Stomach (tissue), 19 donors: ENCODE measurements at regions of chr10 and their contacts with region 1.

Region 1: DNA sequence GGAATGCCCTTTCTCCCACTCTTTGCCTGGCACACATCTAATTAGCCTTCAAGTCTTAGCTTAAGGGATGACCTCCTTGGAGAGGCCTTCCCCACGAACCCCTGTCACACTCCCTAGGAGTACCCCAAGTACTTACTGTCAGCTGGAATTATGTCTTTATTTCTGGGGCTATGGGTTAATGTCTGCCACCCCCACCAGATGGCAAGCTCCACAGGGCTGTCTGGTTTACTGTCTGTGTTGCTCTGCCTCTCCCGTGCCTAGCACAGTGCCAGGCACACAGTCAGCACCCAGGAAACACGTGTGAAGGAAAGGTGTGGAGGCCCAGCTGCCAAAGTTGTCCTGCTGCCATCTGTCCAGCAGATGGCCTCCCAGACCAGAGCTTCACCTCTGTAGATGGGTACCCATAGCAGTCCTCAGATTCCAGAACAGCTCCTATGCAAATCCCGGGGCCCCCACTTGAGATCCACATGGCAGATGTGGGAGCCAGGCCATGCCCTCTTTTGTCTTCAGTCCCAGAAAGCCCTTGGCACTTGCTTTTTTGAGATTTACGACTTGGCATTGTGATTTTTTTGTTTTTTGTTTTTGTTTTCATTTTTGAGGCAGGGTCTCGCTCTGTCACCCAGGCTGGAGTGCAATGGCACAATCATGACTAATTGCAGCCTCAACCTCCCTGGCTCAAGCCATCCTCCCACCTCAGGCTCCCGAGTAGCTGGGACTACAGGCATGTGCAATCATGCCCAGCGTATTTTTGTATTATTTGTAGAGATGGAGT is 17.2 kb upstream of the PALD1 start:
- DNase-seq: peak; percentile 59 to 82
- H3K4me3 ChIP-seq: no peak overlapping the region
- H3K27ac ChIP-seq: peak overlapping the region in 1 of 5 donors; percentile 85
- H3K4me1 ChIP-seq: peaks cover 22 to 44% (median 34%) of the 10 kb centered on the region in 4 donors
- H3K27me3 ChIP-seq: peaks cover 0 to 42% (median 22%) of the 10 kb centered on the region in 3 donors
- CTCF ChIP-seq: peak in 5 of 7 experiments; percentile 65 to 80 (median 76)
- EP300 ChIP-seq: no peak
- POLR2A ChIP-seq: no peak

Region 2: DNA sequence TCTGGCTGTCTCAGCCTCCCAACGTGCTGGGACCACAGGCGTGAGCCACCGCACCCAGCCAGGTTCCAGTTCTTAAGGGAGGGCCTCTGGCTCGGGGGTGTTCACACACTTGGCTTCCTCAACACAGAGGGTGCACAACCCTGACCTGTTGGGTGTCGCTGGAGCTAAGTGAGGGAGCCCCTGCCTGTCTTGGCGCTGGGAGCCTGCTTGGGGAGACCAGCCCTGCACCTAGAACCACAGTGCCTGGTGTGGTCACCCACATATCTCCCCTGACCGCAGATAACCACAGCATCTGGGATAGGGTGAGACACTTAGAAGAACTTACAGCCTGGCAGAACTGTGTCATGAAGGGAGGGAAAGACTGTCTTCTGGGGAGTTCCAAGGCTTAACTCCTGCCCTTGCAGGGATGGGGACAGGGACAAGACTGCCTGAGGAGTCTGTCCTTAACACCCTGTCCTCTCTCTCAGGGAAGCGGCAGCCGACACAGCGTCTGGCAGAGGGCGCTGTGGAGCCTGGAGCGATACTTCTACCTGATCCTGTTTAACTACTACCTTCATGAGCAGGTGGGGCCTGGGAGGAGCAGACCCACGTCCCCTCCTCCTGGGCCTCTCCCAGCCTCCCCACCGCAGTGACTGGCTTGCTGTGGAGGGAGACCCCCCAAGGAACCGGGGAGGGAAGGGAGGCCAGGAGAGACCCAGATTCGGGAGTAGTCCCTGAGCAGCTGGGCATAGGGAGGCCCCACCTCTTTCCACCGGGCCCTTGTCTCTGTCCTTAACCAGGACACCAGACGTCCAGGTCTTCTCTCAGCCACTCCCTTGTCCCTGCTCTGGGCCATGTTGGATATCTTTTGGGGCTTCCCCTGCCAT is 76.2 kb after region 1 on chr10:
- intact Hi-C with region 1: loop called (anchors 5 kb)
- DNase-seq: peak; percentile 36 to 58
- H3K4me3 ChIP-seq: no peak overlapping the region
- H3K27ac ChIP-seq: peak overlapping the region in 1 of 5 donors; percentile 54
- H3K4me1 ChIP-seq: peaks cover 0 to 16% (median 0%) of the 10 kb centered on the region in 4 donors
- H3K27me3 ChIP-seq: no peaks in the 10 kb centered on the region
- CTCF ChIP-seq: peak in 2 of 7 experiments; percentile 11 to 17
- EP300 ChIP-seq: no peak
- POLR2A ChIP-seq: no peak

Region 3: DNA sequence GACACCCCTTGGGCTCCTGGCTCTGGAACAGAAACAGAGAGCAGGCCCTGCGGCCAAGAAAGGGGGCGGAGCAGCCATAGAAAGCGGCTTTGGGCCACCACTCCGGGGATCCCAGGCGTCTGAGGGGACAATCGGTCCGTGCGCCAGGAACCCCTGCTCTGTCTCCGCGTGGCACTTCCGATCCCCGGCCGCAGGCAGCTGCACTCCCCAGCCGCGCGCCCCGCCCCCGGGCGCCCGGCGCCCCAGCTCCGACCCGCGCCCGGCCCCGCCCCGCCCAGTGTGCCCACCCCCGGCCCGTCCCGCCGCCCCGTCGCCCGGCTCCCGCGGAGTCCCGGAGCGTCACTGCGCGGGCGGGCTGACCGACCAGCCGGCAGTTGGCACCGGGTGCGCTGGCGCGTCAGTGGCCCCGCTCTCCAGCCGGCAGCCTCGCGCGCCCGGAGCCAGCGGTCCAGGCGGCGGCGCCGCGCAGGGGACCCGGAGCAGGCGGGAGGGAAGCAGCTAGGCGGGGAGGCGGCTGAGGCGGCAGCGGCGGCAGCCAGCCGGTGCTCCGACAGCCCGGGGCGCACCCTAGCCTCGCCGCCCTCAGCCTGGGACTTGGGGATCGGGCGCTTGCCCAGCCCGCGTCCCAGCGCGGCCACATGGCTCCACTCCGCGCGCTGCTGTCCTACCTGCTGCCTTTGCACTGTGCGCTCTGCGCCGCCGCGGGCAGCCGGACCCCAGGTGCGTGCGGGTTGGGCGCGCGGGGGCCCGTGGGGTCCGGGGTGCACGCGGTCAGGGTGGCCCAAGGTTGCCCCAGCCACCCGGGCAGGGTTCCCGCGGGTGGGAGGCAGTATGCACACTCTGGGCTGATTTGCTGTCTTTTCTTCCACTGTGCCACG is 211.0 kb after region 1 on chr10 and contains the start of gene ADAMTS14:
- intact Hi-C with region 1: no loop called
- DNase-seq: peak in 1 of 2 donors; percentile 83
- H3K4me3 ChIP-seq: peak within 1 kb of the TSS; percentile 41 to 51 (median 46)
- H3K27ac ChIP-seq: peak within 1 kb of the TSS in 4 of 5 donors; percentile 26 to 73 (median 55)
- H3K4me1 ChIP-seq: peaks cover 0 to 29% (median 16%) of the 10 kb centered on the region in 4 donors
- H3K27me3 ChIP-seq: peaks cover 5 to 54% (median 23%) of the 10 kb centered on the region in 3 donors
- CTCF ChIP-seq: no peak
- EP300 ChIP-seq: no peak
- POLR2A ChIP-seq: no peak
- total RNA-seq, gene ADAMTS14: 7.0 to 9.4 (median 7.3) TPM in 3 of 5 donors, not detected in the others

Region 4: GRCh38 chr10:70758757-70759514 is 297.5 kb after region 1 on chr10:
- intact Hi-C with region 1: loop called (anchors 10 kb)
- DNase-seq: peak; percentile 74 to 92
- H3K4me3 ChIP-seq: no peak overlapping the region
- H3K27ac ChIP-seq: no peak overlapping the region
- H3K4me1 ChIP-seq: peaks cover 0 to 5% (median 2%) of the 10 kb centered on the region in 4 donors
- H3K27me3 ChIP-seq: peaks cover 0 to 9% (median 0%) of the 10 kb centered on the region in 3 donors
- CTCF ChIP-seq: peak in 5 of 7 experiments; percentile 32 to 75 (median 56)
- EP300 ChIP-seq: no peak
- POLR2A ChIP-seq: no peak